ENCODE measurements at regions of chr3 and their contacts with region 1.

Region 1: DNA sequence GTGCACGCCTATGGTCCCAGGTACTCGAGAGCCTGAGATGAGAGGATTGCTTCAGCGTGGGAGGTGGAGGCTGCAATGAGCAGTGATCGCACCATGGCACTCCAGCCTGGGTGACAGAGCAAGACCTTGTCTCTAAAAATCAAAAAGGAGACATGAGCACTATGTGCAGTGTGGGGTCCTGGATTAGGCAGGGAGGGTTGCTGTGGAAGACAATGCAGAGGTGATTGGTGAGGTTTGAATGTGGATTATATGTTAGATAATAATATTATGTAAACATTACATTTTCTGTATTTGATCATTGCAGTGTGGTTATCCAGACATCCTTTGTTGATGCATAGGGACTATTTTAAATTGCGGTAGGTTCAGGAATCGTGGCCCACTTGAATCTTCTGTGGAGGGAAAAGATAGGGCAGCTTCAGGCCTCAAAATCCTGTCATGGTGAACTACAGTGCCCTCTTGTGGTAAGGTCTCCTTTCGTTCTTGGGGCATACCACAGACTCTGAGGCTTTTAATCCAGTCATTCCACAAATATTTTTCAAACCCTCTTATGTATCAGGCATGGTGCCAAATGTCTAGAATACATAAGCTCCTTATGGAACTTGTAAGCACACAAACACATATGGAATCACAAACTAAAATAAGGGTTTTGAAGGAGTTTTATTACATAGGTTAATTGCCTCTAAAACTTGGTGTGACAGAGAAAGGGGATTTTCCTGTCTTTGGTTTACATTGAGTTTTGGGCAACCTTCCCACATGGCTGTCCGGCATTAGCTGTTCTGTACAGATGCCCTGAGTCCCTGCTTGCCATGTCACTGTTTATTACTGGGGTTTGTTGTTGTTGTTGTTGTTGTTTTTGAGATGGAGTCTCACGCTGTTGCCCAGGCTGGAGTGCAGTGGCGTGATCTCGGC is 37.7 kb downstream of the GPD1L start:
- DNase-seq: peak; percentile 65
- H3K4me3 ChIP-seq: no peak overlapping the region
- H3K27ac ChIP-seq: no peak overlapping the region
- H3K4me1 ChIP-seq: no peaks in the 10 kb centered on the region
- H3K27me3 ChIP-seq: no peaks in the 10 kb centered on the region
- CTCF ChIP-seq: peak; percentile 69 to 86 (median 80)
- POLR2A ChIP-seq: no peak

Region 2: DNA sequence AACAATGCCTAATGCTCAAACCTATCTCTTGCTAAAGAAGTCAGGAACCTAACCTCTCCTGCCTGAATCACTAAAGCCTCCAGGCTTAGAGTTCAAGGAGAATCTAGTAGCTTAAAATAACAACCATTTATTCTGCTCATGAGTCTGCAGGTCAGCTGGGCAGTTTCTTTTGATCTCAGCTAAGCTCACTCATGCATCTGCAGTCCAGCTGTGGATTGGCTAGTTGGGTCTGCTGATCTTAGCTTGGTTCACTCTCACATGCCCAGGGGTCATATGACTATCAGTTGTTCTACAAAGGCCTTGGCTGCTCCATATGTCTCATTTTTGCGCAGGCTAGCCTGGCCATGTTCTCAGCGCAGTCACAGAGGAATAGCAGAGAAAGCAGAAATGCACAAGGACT is 720.6 kb before region 1 on chr3:
- intact Hi-C with region 1: no loop called
- DNase-seq: no peak
- H3K4me3 ChIP-seq: no peak overlapping the region
- H3K27ac ChIP-seq: no peak overlapping the region
- H3K4me1 ChIP-seq: no peaks in the 10 kb centered on the region
- H3K27me3 ChIP-seq: no peaks in the 10 kb centered on the region
- CTCF ChIP-seq: no peak
- POLR2A ChIP-seq: no peak

Region 3: DNA sequence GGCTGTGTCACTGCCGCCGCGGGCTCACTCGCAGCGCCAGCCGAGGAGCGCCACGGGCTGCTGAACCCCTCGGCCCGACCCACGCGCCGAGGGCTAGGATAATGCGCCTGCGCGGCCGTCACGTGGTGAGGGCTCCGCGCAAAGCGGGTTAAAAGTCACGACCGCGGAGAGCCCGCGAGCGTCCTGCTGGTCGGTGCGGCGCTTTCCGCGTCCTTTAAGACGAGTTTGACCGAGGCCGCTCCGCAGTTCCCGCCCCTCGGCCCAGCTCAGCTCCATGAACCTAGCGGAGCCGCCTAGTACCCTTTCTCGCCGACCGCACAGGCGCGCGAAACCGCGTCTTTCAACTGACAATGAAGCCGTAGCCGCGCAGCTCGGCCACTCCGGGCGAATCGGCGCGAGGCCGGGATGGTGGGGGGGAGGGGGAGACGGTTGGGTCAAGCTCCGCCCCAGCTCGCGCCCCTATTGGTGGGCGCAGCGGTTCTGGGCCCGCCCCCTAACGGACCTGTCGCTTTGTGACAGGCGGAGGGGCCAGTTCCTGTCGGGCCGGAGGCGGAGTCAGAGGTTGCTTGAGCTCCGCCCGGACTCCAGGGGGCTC is 612.0 kb before region 1 on chr3:
- intact Hi-C with region 1: loop called (anchors 10 kb)
- DNase-seq: peak; percentile 99
- H3K4me3 ChIP-seq: peak overlapping the region; percentile 88 to 89
- H3K27ac ChIP-seq: peak overlapping the region; percentile 91 to 96
- H3K4me1 ChIP-seq: peaks cover 9% of the 10 kb centered on the region
- H3K27me3 ChIP-seq: no peaks in the 10 kb centered on the region
- CTCF ChIP-seq: peak; percentile 7 to 60 (median 26)
- POLR2A ChIP-seq: no peak

Region 4: GRCh38 chr3:31610700-31611275 is 533.3 kb before region 1 on chr3:
- intact Hi-C with region 1: loop called (anchors 5 kb)
- DNase-seq: peak; percentile 13
- H3K4me3 ChIP-seq: no peak overlapping the region
- H3K27ac ChIP-seq: no peak overlapping the region
- H3K4me1 ChIP-seq: no peaks in the 10 kb centered on the region
- H3K27me3 ChIP-seq: no peaks in the 10 kb centered on the region
- CTCF ChIP-seq: peak in 3 of 4 experiments; percentile 43 to 71 (median 70)
- POLR2A ChIP-seq: no peak

Region 5: GRCh38 chr3:32018757-32019564 is 125.1 kb before region 1 on chr3:
- intact Hi-C with region 1: loop called (anchors 2 kb)
- DNase-seq: peak; percentile 16
- H3K4me3 ChIP-seq: no peak overlapping the region
- H3K27ac ChIP-seq: no peak overlapping the region
- H3K4me1 ChIP-seq: no peaks in the 10 kb centered on the region
- H3K27me3 ChIP-seq: no peaks in the 10 kb centered on the region
- CTCF ChIP-seq: peak; percentile 51 to 87 (median 82)
- POLR2A ChIP-seq: no peak

Region 6: DNA sequence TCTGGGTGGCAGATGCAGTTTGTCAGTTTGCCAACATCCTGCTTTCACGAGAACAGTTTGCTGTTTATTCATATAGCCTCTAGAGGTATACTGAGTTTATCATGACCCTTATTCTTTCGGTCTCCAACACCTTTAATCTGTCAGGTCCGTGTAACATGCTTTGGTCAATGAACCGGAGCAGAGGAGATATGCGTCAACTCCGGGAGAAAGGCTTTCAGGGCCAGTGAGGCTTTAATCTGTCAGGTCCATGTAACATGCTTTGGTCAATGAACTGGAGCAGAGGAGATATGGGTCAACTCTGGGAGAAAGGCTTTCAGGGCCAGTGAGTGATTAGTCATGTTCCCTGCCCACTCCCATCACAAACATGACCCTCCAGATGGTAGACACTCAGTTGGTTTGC is 54.6 kb before region 1 on chr3:
- intact Hi-C with region 1: no loop called
- DNase-seq: no peak
- H3K4me3 ChIP-seq: no peak overlapping the region
- H3K27ac ChIP-seq: no peak overlapping the region
- H3K4me1 ChIP-seq: no peaks in the 10 kb centered on the region
- H3K27me3 ChIP-seq: no peaks in the 10 kb centered on the region
- CTCF ChIP-seq: no peak
- POLR2A ChIP-seq: no peak

Measured in prostate gland (tissue), 2 donors.